H1 (cell line): ENCODE measurements at regions of chr7 and their contacts with region 1.

Region 1: DNA sequence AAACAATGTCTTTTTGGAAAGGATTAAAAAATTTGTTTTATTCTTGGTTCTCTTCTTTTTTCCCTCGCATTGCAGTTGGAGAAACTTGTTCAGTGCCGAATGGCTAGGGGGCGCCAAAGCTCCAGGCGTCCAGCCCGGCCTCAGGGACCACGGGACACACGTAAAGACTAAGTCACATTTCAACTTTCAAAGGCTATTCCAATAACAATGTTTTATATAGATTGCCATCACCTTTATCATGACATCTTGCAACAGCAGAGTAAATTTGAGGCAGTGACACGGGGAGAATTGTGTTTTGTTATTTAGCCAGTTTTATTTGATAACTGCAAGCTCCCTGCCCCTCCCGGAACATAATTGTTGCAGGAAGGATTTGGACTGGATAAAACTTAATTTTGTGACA is 2.2 kb upstream of the IGFBP3 start:
- DNase-seq: peak in 1 of 2 experiments; percentile 88
- H3K4me3 ChIP-seq: peak overlapping the region in 2 of 4 experiments; percentile 17 to 67; a peak in 5 of 8 replicates
- H3K27ac ChIP-seq: no peak overlapping the region
- H3K4me1 ChIP-seq: peaks cover 6 to 26% (median 12%) of the 10 kb centered on the region in 4 experiments; a peak in 6 of 7 replicates
- H3K27me3 ChIP-seq: peaks cover 14 to 41% (median 33%) of the 10 kb centered on the region in 4 experiments
- CTCF ChIP-seq: peak; percentile 74 to 86 (median 85)
- EP300 ChIP-seq: no peak
- POLR2A ChIP-seq: no peak
- RAD21 ChIP-seq: peak; percentile 93 to 94

Region 2: DNA sequence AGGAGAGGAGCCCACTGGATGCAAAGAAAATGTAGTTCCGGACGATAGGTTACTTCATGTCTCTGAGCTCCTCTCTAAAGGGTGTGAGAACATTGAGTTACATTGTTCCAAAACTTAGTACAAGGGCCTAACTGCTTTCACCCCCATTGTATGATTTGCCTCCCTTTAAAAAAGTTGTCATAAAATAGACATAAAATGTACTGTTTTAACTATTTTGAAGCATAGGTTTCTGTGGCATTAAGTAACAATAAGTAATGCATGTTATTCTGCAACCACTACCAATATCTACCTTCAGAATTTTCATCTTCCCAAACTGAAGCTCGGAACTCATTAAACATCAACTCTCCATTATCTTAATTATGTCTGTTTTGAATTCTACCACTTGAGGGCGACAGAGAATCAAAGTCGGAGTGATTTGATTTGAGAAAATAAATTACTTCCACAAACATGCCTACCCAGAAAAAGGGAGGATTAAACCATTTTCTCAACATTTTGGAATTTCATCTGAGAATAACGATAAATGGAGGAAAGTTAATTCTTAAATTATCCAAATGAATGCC is 32.3 kb before region 1 on chr7:
- CTCF ChIA-PET with region 1: interaction called, 22 read pairs
- POLR2A ChIA-PET with region 1: interaction called, 5 read pairs
- DNase-seq: no peak
- H3K4me3 ChIP-seq: no peak overlapping the region
- H3K27ac ChIP-seq: no peak overlapping the region
- H3K4me1 ChIP-seq: peaks cover 2 to 15% (median 9%) of the 10 kb centered on the region in 4 experiments
- H3K27me3 ChIP-seq: peaks cover 23 to 42% (median 35%) of the 10 kb centered on the region in 4 experiments
- CTCF ChIP-seq: peak in 2 of 3 experiments; percentile 29 to 41; a peak in 2 of 4 replicates
- EP300 ChIP-seq: no peak
- POLR2A ChIP-seq: no peak
- RAD21 ChIP-seq: peak; percentile 65 to 70

Region 3: DNA sequence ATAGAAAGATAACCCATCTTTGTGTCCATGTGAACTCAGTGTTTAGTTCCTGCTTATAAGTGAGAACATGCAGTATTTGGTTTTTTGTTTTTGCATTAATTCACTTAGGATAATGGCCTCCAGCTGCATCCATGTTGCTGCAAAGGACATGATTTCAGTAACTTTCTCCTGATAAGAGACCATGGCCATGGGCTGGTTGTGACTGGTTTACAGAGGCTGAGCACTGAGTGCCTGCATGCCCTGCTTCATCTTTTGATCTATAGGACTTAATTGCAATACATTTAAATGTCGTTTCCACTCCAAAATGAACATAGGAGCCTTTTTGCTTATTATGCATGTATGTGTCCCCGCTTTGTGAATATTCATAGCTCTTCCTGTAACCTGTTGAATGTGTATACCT is 99.1 kb after region 1 on chr7:
- CTCF ChIA-PET with region 1: interaction called, 10 read pairs
- POLR2A ChIA-PET with region 1: no interaction called
- DNase-seq: no peak
- H3K4me3 ChIP-seq: no peak overlapping the region
- H3K27ac ChIP-seq: no peak overlapping the region
- H3K4me1 ChIP-seq: no peaks in the 10 kb centered on the region
- H3K27me3 ChIP-seq: no peaks in the 10 kb centered on the region
- CTCF ChIP-seq: no peak
- EP300 ChIP-seq: no peak
- POLR2A ChIP-seq: no peak
- RAD21 ChIP-seq: no peak

Region 4: GRCh38 chr7:46153951-46154787 is 230.9 kb after region 1 on chr7:
- CTCF ChIA-PET with region 1: interaction called, 12 read pairs
- POLR2A ChIA-PET with region 1: no interaction called
- DNase-seq: no peak
- H3K4me3 ChIP-seq: no peak overlapping the region
- H3K27ac ChIP-seq: no peak overlapping the region
- H3K4me1 ChIP-seq: no peaks in the 10 kb centered on the region
- H3K27me3 ChIP-seq: no peaks in the 10 kb centered on the region
- CTCF ChIP-seq: peak in 2 of 3 experiments; percentile 3 to 26; a peak in 1 of 4 replicates
- EP300 ChIP-seq: no peak
- POLR2A ChIP-seq: no peak
- RAD21 ChIP-seq: peak; percentile 14 to 40; a peak in 2 of 4 replicates

Region 5: DNA sequence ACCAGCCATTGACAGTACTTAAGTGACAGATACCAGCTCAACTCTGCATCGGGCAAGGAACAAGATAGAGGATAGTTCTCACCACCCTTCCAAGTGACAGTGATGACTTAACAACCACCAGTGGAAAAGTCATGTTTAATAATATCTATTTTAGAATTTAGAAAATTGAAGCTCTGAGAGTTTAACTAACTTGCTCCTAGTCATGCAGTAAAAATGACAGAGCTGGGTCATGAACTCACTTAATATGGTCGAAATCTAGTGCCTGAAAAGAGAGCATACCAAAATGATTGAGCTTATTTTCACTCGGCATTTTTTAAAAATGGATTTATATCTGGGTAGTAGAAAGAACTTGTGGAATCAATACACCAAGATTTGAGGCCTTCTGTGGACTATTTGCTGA is 365.6 kb after region 1 on chr7:
- CTCF ChIA-PET with region 1: interaction called, 12 read pairs
- POLR2A ChIA-PET with region 1: no interaction called
- DNase-seq: no peak
- H3K4me3 ChIP-seq: no peak overlapping the region
- H3K27ac ChIP-seq: no peak overlapping the region
- H3K4me1 ChIP-seq: peaks cover 0 to 2% (median 0%) of the 10 kb centered on the region in 4 experiments; a peak in 1 of 7 replicates
- H3K27me3 ChIP-seq: no peaks in the 10 kb centered on the region
- CTCF ChIP-seq: no peak
- EP300 ChIP-seq: no peak
- POLR2A ChIP-seq: no peak
- RAD21 ChIP-seq: no peak

Region 6: GRCh38 chr7:47088329-47089067 is 1165.2 kb after region 1 on chr7:
- CTCF ChIA-PET with region 1: interaction called, 16 read pairs
- POLR2A ChIA-PET with region 1: no interaction called
- DNase-seq: peak; percentile 15 to 63
- H3K4me3 ChIP-seq: no peak overlapping the region
- H3K27ac ChIP-seq: no peak overlapping the region
- H3K4me1 ChIP-seq: no peaks in the 10 kb centered on the region
- H3K27me3 ChIP-seq: no peaks in the 10 kb centered on the region; a peak in 1 of 7 replicates
- CTCF ChIP-seq: peak; percentile 70 to 77 (median 72)
- EP300 ChIP-seq: no peak
- POLR2A ChIP-seq: no peak
- RAD21 ChIP-seq: peak; percentile 96 to 97